ENCODE measurements at regions of chr7 and their contacts with region 1.

Region 1: DNA sequence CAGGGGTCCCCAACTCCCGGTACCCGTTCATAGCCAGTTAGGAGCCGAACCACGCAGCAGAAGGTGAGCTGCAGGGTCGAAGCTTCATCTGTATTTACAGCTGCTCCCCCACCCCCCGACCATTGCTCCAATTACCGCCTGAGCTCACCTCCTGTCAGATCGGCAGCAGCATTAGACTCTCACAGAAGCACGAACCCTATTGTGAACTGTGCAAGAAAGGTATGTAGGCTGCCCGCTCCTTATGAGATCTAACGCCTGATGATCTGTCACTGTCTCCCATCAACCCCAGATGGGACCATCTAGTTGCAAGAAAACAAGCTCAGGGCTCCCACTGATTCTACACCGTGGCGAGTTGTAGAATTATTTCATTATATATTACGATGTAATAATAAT is 14.6 kb upstream of the AZGP1 start:
- H3K4me3 ChIP-seq: no peak overlapping the region
- H3K27ac ChIP-seq: no peak overlapping the region
- H3K4me1 ChIP-seq: no peaks in the 10 kb centered on the region
- CTCF ChIP-seq: no peak

Region 2: DNA sequence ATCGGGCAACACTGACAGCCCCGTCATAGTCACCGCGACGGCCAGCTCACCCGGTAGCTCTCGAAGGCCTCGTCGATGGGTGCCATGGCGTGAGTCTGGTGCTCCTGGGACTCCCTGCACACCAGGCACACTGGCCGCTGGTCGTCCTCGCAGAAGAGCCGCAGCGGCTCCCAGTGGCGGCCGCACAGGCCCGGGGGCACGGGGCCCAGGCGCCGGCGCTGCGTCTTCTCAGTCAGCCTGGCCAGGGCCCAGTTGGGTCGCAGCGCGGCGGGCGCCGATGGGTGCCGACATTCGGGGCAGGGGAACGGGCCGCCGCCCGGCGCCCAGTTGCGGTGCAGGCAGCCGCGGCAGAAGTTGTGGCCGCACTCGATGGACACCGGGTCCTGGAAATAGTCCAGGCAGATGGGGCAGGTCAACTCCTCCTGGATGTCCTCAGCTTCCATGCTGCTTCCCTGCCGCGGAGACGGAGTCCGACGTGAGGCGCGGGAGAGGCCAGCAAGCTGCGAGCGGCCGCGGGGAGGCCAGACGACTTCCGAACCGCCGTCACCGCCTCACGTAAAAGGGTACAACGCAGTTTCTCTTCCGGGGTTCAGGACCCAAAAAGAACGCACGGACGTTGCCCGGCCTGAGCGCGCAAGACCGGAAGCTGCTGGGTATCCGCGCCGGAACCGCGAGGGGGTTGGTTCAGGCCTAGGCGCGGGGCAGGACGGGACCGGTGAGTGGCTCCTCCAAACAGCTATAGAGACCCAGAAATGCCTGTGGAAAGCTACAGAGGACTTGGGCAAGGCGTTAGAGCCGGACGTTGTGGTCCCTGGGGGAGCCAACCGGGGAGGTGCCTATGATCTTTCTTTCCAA is 71.3 kb before region 1 on chr7 and contains the start of gene TRIM4:
- CTCF ChIA-PET with region 1: interaction called, 20 read pairs
- POLR2A ChIA-PET with region 1: no interaction called
- H3K4me3 ChIP-seq: peak within 1 kb of the TSS; percentile 79
- H3K27ac ChIP-seq: peak within 1 kb of the TSS; percentile 79
- H3K4me1 ChIP-seq: 0 out of 2 replicates have a peak, but pooled peaks cover 2% of the 10 kb centered on the region
- CTCF ChIP-seq: peak; percentile 58

Region 3: DNA sequence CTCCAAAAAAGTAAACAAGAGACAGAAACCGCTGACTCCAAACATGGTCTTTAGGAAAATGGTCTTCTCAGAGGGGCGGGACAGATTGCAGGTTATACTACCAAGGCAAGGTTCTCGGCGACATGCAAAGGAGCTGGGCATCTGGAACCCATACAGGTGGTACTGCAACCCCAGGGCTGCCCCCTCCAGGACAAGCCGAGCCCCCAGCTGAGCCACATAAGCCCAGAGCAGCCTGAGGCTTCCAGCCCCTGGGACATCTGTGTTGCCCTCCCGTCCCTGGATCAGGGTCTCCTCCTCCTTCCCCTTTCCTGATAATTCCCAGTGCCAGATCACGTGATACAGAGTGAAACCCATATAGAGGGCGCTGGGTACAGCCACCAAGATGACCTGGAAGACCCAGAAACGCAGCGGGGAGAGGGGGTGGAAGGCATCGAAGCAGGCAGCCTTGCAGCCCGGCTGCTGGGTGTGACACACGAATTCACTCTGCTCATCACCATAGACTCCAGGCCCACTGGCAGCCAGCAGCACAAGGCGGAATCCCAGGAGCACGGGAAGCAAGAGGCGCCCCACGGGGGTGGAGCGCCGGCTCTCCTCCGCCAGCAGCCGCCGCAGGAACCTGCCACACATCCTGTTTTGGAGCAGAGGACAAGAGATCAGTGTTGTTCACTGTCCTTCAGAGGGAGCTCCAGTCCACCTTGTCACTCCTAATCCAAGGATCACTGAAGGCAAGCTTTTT is 61.3 kb before region 1 on chr7 and contains the start of gene GJC3:
- CTCF ChIA-PET with region 1: interaction called, 13 read pairs
- POLR2A ChIA-PET with region 1: no interaction called
- H3K4me3 ChIP-seq: peak within 1 kb of the TSS; percentile 27
- H3K27ac ChIP-seq: no peak within 1 kb of the TSS
- H3K4me1 ChIP-seq: no peaks in the 10 kb centered on the region
- CTCF ChIP-seq: peak; percentile 59

Region 4: DNA sequence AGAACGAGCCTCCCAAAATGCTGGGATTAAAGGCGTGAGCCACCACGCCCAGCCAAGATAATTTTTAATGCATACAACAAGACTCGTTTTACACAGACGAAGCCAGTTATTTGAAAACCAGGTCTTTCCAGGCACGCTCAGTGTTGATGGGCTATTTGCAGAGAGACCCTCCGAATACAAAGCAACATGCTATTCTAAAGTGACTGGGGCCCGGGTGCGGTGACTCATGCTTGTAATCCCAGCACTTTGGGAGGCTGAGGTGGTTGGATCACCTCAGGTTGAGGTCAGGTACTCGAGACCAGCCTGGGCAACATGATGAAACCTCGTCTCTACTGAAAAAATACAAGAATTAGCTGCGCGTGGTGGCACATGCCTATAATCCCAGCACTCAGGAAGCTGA is 13.8 kb before region 1 on chr7:
- CTCF ChIA-PET with region 1: interaction called, 53 read pairs
- POLR2A ChIA-PET with region 1: interaction called, 3 read pairs
- H3K4me3 ChIP-seq: no peak overlapping the region
- H3K27ac ChIP-seq: no peak overlapping the region
- H3K4me1 ChIP-seq: no peaks in the 10 kb centered on the region
- CTCF ChIP-seq: no peak

Region 5: DNA sequence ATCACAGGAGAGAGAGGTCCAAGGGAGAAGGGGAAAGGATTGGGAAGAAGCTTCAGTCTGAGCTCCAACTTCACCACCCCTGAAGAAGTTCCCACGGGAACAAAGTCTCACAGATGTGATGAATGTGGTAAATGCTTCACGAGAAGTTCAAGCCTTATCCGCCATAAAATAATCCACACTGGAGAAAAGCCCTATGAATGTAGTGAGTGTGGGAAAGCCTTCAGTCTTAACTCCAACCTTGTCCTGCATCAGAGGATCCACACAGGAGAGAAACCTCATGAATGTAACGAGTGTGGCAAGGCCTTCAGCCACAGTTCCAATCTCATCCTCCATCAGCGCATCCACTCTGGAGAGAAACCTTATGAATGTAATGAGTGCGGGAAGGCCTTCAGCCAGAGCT is 43.1 kb after region 1 on chr7:
- CTCF ChIA-PET with region 1: no interaction called
- POLR2A ChIA-PET with region 1: no interaction called
- H3K4me3 ChIP-seq: no peak overlapping the region
- H3K27ac ChIP-seq: no peak overlapping the region
- H3K4me1 ChIP-seq: no peaks in the 10 kb centered on the region
- CTCF ChIP-seq: no peak

Region 6: DNA sequence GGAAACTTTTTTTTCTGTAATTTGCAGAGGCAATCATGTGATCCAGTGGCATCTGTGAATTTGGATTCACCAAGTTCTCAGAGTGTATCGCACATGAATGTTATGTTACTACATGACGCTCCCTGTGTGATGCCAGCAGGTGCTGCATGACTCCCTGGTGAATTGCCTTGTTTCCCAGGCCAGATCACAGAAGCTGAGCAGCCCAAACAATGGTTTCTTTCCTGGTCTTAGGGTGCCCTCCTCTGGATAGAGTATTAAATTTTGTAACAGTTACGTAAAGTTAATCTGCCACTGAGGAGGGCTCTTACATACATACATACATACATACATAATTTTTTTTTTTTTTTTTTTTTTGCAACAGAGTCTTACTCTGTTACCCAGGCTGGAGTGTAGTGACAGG is 62.8 kb after region 1 on chr7:
- CTCF ChIA-PET with region 1: interaction called, 23 read pairs
- POLR2A ChIA-PET with region 1: no interaction called
- H3K4me3 ChIP-seq: no peak overlapping the region
- H3K27ac ChIP-seq: no peak overlapping the region
- H3K4me1 ChIP-seq: peaks cover 3% of the 10 kb centered on the region; the same call in 1 of the 2 replicates
- CTCF ChIP-seq: peak; percentile 25; the same call in 1 of the 2 replicates

Measured in HEK293 (cell line).